ENCODE measurements at regions of chr7 and their contacts with region 1.

Region 1: DNA sequence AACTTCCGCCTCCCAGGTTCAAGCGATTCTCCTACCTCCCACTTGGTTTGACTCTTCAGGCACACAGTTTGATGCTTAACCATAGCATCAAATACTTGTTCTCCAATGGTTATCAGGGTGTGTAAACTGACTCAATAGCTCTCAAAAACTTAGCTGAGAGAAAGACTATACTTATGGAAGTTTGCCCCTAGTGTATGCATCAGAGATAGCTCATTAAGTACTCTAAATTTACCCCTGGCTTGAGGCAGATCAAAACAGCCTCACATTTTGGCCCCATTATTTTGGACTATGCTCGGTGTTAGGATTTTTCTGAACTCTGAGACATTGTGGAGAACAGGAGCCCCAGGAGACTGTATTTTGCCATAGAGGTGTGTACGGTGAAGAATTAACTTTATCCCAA is 40.8 kb upstream of the SLC35B4 start:
- DNase-seq: no peak
- CTCF ChIP-seq: no peak

Region 2: GRCh38 chr7:134368851-134369552 is 11.5 kb after region 1 on chr7:
- CTCF ChIA-PET with region 1: interaction called, 10 read pairs
- POLR2A ChIA-PET with region 1: no interaction called
- DNase-seq: no peak
- CTCF ChIP-seq: no peak

Region 3: GRCh38 chr7:134565643-134566136 is 208.2 kb after region 1 on chr7:
- CTCF ChIA-PET with region 1: no interaction called
- POLR2A ChIA-PET with region 1: no interaction called
- DNase-seq: no peak
- CTCF ChIP-seq: no peak

Measured in GM10248 (cell line).